Right ventricle myocardium inferior (tissue), 1 donor: ENCODE measurements at regions of chr16 and their contacts with region 1.

Region 1: DNA sequence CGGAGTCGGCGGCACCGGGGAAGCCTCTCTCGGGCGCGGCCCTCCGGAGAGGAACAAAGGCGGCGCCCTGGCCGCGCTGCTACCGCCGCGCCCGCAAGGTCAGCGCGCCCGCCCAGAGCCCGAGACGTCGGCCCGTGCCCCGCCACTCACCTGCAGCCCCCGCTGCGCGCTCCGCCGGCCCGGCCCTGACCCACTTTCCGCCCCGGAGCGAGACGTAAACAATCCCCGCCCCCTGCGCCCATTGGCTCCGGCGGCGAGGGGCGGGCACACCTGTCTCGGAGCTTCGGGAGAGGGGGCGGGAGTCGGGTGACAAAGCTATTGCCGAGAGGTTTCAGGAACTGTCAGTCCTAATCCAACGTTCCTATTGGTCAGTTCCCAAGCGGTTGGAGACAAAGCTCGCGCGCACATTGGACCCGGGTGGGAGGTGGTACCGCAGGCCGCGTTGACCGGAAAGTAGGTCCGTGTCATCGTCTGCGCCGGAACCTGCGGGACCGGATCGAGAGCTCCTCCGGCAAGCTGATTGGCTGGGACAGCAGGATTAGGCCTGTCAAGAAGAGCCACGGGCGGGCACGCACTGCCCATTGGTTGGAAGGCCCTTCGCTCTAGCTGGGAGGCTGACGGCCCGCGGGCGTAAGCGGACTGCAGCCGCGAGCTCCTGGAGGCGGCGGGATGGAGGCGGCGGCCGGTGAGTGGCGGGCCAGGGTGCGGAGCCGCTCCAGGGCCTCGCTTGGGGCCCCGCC is at the starts of genes NUBP2 and SPSB3:
- DNase-seq: peak; percentile 100
- ATAC-seq: peak; percentile 96
- total RNA-seq, gene NUBP2: 37.9 TPM
- total RNA-seq, gene SPSB3: 36.1 TPM

Region 2: GRCh38 chr16:1740781-1741452 is 41.6 kb before region 1 on chr16:
- intact Hi-C with region 1: no loop called
- DNase-seq: peak; percentile 25
- ATAC-seq: no peak

Region 3: GRCh38 chr16:1826691-1827575 is 44.4 kb after region 1 on chr16 and contains the starts of genes FAHD1 and HAGH:
- intact Hi-C with region 1: loop called (anchors 5 kb)
- DNase-seq: peak; percentile 96
- ATAC-seq: peak; percentile 96
- total RNA-seq, gene FAHD1: 28.3 TPM
- total RNA-seq, gene HAGH: 171 TPM

Region 4: DNA sequence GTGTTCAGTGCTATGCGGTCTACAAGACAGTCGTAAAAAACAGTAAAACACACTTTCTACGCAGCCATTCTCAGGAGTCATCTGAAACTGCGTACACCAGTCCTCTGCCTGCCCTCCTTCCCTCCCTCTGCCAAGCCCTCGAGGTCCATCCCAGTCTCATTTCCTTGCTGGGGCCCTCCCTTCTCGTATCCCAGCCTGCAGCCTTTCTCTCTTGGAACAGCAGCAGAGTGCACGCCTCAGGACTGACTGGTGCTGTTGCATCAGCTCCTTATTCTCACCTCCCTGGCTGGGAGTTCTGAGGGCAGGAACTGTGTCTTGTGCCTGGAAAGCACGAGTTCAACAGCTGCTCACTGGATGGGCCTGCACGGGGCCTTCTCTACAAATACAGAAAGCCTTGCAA is 57.0 kb after region 1 on chr16:
- intact Hi-C with region 1: no loop called
- DNase-seq: no peak
- ATAC-seq: no peak